ENCODE measurements at regions of chr10 and their contacts with region 1.

Region 1: DNA sequence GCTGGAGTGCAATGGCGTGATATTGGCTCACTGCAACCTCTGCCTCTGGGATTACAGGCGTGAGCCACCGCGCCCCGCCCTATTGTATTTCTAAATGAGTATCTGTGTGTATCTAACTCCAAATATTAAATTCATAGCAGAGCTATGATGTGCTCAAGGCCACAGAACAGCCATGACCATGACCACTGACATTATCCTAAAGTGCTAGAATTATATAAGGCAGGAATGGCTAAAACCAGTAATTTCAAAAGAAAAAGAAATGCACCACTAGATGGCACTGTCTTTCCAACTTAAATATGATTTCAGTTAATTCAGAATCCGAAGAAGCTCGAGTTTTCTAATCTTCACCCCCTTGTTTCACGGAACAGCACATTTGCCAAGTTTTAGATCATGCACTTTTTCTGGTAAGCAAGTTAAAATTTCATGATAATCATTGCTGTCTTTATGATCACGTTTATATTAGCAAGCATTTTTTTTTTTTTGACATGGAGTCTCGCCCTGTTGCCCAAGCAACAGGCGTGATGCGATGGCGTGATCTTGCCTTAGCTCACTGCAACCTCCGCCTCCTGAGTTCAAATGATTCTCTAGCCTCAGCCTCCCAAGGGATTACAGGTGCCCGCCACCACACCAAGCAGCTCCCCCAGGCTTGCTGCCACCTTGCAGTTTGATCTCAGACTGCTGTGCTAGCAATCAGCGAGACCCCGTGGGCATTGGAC is 65.3 kb downstream of the OR13A1 start:
- DNase-seq: peak; percentile 12
- H3K27ac ChIP-seq: no peak overlapping the region
- CTCF ChIP-seq: peak; percentile 51

Region 2: DNA sequence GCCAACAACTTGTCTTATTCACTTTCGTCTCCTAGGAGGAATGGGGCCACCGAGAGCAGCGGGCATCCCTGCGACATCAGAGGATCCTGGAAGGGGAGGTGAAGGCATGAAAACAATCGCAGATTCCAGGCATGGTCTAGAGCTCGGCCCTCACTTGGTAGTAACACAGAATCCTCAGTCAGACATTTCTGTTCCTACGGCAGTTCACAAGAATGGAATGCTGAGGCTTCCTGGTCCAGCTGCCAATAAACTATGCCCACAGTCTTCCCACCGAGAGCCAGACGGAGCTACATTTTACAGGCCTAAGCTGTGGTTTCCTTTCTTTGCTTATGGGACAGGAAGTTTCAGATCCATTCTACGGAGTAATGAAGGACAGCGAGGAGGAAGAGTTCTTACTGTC is 10.5 kb before region 1 on chr10:
- CTCF ChIA-PET with region 1: interaction called, 14 read pairs
- POLR2A ChIA-PET with region 1: no interaction called
- DNase-seq: no peak
- H3K27ac ChIP-seq: no peak overlapping the region
- CTCF ChIP-seq: no peak

Region 3: DNA sequence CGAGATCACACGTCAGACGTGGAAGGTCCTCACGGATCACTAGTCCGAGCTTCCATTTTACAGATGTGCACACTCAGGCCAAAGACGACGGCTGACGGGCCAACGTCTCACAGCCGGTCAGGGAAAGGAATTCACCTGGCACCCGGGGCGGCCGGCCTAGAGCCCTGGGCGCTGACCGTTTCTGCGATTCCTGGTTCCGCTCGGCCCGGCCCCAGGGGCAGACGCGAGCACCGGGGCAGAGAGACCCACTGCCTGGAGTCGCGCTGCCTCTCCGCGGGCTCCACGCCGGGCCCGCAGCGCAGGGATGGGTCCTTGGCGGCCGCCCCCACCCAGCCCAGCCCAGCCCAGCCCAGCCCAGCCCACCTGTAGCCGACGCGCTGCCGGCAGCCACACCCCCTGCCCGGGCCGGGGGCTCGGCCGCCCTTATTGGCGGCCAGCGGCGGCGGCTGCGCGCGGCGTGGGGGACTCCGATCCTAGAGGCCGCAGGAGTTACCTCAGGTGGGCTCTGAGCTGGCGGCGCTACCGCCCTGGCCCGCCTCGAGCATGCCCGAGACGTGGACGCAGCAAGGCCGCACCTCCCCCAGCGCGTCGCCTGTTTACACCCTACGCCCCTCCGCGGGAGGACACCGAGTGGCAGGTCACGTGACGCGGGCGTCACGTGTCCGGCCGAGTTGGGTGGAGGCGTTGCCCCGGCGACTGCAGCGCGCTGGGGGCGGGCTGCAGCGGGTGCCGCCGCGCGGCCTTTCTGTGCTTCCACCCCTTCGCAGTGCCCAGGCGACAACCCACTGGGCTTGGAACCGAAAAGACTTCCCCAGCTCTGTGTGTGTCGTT is 344.4 kb after region 1 on chr10:
- CTCF ChIA-PET with region 1: no interaction called
- POLR2A ChIA-PET with region 1: no interaction called
- DNase-seq: peak; percentile 80
- H3K27ac ChIP-seq: peak overlapping the region; percentile 65
- CTCF ChIP-seq: no peak

Region 4: DNA sequence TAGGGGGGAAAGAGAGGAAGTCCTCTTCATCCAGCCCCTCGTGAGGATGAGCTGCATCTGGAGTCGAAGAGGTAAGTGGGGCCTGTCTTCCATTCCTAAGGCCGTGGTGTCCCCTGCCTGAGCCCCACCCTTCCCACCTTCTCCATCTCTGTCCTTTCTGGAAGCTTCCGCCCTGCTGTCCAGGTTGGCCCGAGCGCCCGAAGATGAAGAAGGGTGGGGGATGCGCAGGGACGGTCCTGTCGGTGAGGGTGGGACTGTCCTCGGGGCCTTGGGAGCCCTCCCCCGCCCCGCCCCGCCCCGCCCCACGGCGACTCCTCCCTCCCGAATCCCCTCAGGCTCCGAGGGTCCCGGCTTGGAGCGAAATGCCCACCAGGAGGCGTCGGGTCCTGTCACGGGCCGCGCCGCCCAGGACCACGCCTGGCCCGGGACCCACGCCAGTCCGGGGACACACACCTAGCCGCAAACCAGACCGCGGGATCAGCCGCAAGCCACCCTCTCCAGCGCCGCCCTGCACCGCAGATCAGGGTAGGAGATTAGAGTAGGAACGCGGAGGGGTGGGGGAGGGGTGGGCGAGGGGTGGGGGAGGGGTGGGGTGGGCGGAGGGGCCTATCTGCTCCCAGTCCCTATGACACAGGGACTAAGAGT is 1291.0 kb after region 1 on chr10:
- CTCF ChIA-PET with region 1: no interaction called
- POLR2A ChIA-PET with region 1: no interaction called
- DNase-seq: no peak
- H3K27ac ChIP-seq: no peak overlapping the region
- CTCF ChIP-seq: no peak

Measured in RWPE1 (cell line).